Activated naive CD4-positive, alpha-beta T cell treated with anti-CD3 and anti-CD28 coated beads, Interleukin-2, amount 10 ng/mL, durations not matched to agents 7 days and 5 days (primary cell): ENCODE measurements at regions of chr14 and their contacts with region 1.

Region 1: GRCh38 chr14:92106143-92106926 is at the start of gene ATXN3:
- DNase-seq: peak; percentile 96
- H3K4me3 Mint-ChIP-seq: peak within 1 kb of the TSS; percentile 88
- H3K27ac Mint-ChIP-seq: peak within 1 kb of the TSS; percentile 88
- H3K4me1 Mint-ChIP-seq: peaks cover 39% of the 10 kb centered on the region
- H3K27me3 Mint-ChIP-seq: peaks cover 4% of the 10 kb centered on the region

Region 2: DNA sequence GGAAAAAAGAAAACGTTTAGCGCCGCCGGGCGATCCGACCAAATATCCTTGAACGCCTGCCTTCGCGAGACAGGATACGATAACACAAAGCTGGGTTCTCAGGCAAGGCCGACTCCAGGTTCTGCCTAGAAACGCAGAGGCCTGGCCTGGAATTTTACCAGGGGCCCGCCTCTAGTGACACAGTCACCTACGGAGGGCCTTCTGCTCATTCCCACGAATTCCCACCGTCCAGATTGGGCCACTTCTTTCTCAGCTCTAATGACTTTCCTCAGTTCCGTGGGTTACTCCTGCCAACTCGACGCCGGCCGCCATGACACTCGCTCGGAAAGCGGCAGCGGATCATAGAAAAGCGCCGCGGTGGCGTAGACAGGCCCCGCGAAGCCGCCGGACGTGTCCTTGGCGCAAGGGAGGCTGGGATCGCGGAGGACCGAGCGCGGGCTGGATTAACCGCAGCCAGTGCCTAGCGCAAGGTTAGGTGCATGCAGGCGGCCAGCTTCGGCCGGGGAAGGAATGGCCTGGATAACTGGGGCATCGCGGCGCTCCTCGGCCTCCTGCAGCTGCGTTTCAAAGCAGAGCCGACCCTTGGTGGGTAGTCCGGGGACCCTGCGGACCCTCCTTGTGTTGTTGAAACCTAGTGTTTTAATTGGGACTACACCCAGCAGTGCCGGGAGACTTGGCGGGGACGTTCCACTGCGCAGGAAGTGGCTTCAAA is 66.5 kb before region 1 on chr14 and contains the start of gene TRIP11:
- CTCF ChIA-PET with region 1: interaction called, 10 read pairs
- DNase-seq: peak; percentile 97
- H3K4me3 Mint-ChIP-seq: peak within 1 kb of the TSS; percentile 91
- H3K27ac Mint-ChIP-seq: peak within 1 kb of the TSS; percentile 99
- H3K4me1 Mint-ChIP-seq: peaks cover 45% of the 10 kb centered on the region
- H3K27me3 Mint-ChIP-seq: no peaks in the 10 kb centered on the region

Region 3: DNA sequence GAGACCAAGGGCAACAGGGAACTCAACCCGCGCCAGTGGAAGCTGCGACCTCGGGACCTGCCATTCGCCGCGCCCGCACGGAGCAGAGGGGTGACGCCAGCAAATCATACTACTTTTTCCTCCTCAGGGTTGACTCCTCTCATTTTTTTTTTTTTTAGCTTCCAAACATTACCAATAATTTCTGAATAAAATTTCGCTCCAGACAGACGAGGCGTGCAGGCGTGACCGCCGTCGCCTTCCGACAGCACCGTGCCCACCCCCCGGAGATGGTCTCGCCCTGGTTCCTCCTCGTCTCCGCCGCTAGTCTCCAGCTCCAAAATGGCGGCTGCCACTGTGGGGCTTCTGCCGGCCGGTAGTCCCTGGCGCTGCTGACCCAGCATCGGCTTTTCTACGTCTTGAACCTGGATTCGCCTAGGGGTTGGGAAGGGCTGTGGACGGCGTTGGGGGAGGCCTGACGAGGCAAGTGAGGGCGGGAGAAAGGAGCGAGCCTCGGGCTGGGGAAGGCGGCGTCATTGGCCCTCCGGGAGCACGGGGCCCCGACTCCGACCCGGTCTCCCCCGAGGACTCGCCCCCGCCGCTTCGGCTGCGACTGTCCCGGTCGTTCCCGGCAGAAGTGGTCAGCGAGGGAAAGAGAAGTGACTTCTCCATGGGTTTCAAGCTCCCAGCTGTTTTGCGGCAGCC is 15.5 kb after region 1 on chr14 and contains the starts of genes CPSF2 and NDUFB1:
- CTCF ChIA-PET with region 1: interaction called, 26 read pairs
- DNase-seq: peak; percentile 92
- H3K4me3 Mint-ChIP-seq: peak within 1 kb of the TSS; percentile 91
- H3K27ac Mint-ChIP-seq: peak within 1 kb of the TSS; percentile 98
- H3K4me1 Mint-ChIP-seq: peaks cover 41% of the 10 kb centered on the region
- H3K27me3 Mint-ChIP-seq: no peaks in the 10 kb centered on the region